MCF 10A (cell line): ENCODE measurements at regions of chr1 and their contacts with region 1.

Region 1: DNA sequence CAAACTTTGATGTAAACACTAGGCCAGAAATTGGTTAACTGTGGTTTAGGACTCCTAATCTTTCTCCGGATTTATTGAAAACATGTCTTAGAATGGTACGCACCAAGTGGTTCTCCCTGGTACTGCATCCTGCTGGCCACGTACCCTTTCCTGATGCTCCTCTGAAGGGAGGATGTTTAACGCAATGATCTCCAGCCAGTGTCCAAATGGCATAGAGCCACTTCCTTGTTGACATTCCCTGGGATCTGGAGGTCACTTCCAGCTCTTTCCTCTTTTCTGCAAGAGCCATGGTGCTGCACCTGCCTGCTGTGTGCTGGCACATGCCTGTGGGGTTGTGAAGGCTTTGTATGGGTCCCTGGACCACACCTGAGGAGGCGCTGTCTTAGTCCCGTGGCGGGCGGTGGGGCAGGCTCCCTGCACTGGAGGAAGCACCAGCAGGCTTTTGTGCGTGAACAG is 53.9 kb downstream of the GALNT2 start:
- DNase-seq: peak; percentile 72
- H3K4me3 Mint-ChIP-seq: no peak overlapping the region
- H3K27ac Mint-ChIP-seq: peak overlapping the region; percentile 87
- H3K4me1 Mint-ChIP-seq: peaks cover 54% of the 10 kb centered on the region
- H3K27me3 Mint-ChIP-seq: no peaks in the 10 kb centered on the region
- CTCF ChIP-seq: peak; percentile 74

Region 2: DNA sequence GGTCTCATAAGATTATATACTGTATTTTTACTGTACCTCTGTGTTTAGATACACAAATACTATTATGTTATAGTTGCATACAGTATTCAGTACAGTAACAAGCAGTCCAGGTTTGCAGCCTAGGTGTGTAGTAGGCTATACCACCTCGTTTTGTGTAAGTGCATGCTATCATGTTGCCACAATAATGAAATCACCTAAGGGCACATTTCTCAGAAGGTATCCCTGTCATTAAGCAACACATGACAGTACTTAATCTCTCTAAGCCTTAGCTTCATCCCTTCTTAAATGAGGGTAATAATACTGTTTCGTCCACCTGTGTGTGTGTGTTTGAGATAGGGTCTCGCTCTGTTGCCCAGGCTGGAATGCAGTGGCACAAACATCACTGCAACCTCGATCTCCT is 27.3 kb before region 1 on chr1:
- CTCF ChIA-PET with region 1: no interaction called
- POLR2A ChIA-PET with region 1: no interaction called
- intact Hi-C with region 1: no loop called
- DNase-seq: no peak
- H3K4me3 Mint-ChIP-seq: no peak overlapping the region
- H3K27ac Mint-ChIP-seq: no peak overlapping the region
- H3K4me1 Mint-ChIP-seq: peaks cover 44% of the 10 kb centered on the region
- H3K27me3 Mint-ChIP-seq: no peaks in the 10 kb centered on the region
- CTCF ChIP-seq: no peak

Region 3: DNA sequence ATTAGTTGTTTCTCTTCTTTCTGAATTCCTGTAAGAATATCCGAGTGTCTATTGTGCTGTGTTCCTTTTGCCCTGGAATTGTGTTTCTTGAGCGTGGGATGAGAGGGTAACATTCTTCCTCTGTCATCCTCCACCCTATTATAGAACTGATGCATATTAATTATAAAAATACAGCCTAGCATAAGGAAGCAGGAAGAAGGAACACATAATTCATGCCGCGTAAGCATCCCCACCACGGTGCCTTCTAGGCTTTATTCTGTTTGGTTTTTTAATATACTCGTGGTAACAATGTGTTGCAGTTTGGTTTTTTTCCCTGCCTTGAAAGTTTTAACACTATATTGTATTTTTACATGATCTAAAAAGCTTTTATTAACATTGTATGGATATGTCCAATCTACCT is 11.8 kb after region 1 on chr1:
- CTCF ChIA-PET with region 1: interaction called, 3 read pairs
- POLR2A ChIA-PET with region 1: interaction called, 13 read pairs
- intact Hi-C with region 1: no loop called
- DNase-seq: no peak
- H3K4me3 Mint-ChIP-seq: no peak overlapping the region
- H3K27ac Mint-ChIP-seq: no peak overlapping the region
- H3K4me1 Mint-ChIP-seq: peaks cover 8% of the 10 kb centered on the region
- H3K27me3 Mint-ChIP-seq: no peaks in the 10 kb centered on the region
- CTCF ChIP-seq: no peak

Region 4: GRCh38 chr1:230243583-230244353 is 122.8 kb after region 1 on chr1:
- CTCF ChIA-PET with region 1: no interaction called
- POLR2A ChIA-PET with region 1: no interaction called
- intact Hi-C with region 1: no loop called
- DNase-seq: no peak
- H3K4me3 Mint-ChIP-seq: no peak overlapping the region
- H3K27ac Mint-ChIP-seq: no peak overlapping the region
- H3K4me1 Mint-ChIP-seq: peaks cover 8% of the 10 kb centered on the region
- H3K27me3 Mint-ChIP-seq: no peaks in the 10 kb centered on the region
- CTCF ChIP-seq: no peak